ENCODE measurements at regions of chr6 and their contacts with region 1.

Region 1: DNA sequence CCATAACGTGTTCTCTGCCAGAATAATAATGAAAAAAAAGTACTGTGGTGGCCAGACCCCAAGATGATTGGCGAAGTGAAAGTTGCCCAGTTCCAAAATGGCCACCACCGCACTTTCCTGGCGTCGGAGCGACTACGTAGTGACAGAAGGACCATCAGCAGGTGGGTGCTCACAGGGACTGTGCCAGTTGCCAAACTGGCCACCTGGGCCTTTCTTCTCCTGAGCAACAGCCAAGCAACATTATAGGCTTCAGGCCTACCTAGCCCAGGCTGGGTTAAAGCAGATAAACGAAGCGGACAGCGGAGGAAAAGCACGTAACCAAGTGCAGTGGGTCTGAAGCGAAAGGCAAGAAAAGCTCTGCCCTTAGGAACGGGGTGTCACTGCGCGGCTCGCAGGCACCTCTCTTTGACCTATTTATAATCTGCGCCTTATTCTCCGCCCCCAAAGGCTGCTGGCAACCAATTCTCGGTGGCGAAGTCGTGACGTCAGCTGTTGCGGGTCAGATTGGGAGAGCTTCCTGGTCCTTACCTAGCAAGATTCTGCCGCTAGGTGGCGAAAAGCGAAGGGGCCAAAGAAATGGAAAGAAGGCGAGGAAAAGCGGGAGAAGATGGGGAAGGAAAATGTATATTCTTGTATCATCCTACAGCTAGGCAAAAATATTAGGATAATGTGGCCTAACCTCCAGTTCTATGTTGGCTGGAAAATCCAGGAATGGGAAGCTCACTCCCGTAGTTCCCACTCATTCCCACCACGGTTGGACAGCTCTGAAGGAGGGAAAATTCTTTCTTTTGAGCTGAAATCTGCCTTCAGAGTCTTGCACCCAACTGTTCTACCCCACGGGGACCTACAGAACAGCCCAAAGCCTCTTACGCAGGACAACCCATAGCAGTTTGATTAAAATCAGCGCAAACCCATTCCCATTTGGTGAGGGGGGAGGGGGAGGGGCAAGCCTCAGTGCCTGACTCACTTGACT is 6.9 kb upstream of the MOG start:
- DNase-seq: peak; percentile 99
- ATAC-seq: peak; percentile 89
- H3K4me3 Mint-ChIP-seq: peak overlapping the region; percentile 85
- H3K27ac Mint-ChIP-seq: peak overlapping the region; percentile 99
- H3K4me1 Mint-ChIP-seq: peaks cover 36% of the 10 kb centered on the region
- H3K27me3 Mint-ChIP-seq: no peaks in the 10 kb centered on the region
- CTCF ChIP-seq: peak; percentile 73

Region 2: GRCh38 chr6:29627755-29628418 is 22.1 kb before region 1 on chr6:
- CTCF ChIA-PET with region 1: interaction called, 63 read pairs
- POLR2A ChIA-PET with region 1: interaction called, 16 read pairs
- DNase-seq: peak; percentile 85
- ATAC-seq: peak; percentile 10
- H3K4me3 Mint-ChIP-seq: peak overlapping the region; percentile 87
- H3K27ac Mint-ChIP-seq: peak overlapping the region; percentile 93
- H3K4me1 Mint-ChIP-seq: peaks cover 76% of the 10 kb centered on the region
- H3K27me3 Mint-ChIP-seq: no peaks in the 10 kb centered on the region
- CTCF ChIP-seq: no peak

Region 3: GRCh38 chr6:29665942-29666825 is 16.2 kb after region 1 on chr6:
- CTCF ChIA-PET with region 1: interaction called, 192 read pairs
- POLR2A ChIA-PET with region 1: interaction called, 20 read pairs
- DNase-seq: no peak
- ATAC-seq: peak; percentile 13
- H3K4me3 Mint-ChIP-seq: peak overlapping the region; percentile 14
- H3K27ac Mint-ChIP-seq: peak overlapping the region; percentile 99
- H3K4me1 Mint-ChIP-seq: peaks cover 73% of the 10 kb centered on the region
- H3K27me3 Mint-ChIP-seq: peaks cover 23% of the 10 kb centered on the region
- CTCF ChIP-seq: no peak

Region 4: DNA sequence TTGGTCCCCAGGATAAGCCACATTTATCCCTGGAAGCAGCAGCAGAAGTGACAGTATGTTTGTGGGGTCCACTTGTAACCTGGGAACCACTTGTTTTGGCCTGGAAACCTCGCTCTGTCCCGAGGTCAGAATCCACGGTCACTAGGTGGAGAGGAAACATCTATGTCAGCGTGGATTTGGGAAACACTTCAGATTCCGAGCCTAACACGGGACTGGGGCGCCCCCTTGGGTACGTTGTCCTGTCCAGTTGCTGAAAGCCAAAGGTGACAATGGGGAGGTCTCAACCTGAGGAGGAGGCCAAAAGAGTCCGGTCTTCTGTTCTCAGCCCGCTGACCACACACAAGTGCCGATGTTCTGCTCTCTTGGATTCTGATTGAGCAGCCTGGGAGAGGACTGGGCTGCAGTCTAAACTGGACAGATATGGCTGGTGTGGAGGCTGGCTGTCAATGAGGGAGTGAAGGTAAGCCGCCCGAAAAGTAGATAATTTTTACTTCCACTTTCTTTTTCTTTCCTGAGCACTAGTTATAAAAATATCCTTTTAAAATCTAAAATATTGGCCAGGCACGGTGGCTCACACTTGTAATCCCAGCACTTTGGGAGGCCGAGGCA is 35.8 kb after region 1 on chr6:
- CTCF ChIA-PET with region 1: interaction called, 531 read pairs
- POLR2A ChIA-PET with region 1: interaction called, 8 read pairs
- DNase-seq: peak; percentile 84
- ATAC-seq: peak; percentile 88
- H3K4me3 Mint-ChIP-seq: no peak overlapping the region
- H3K27ac Mint-ChIP-seq: no peak overlapping the region
- H3K4me1 Mint-ChIP-seq: peaks cover 15% of the 10 kb centered on the region
- H3K27me3 Mint-ChIP-seq: peaks cover 2% of the 10 kb centered on the region; the same call in 1 of the 2 replicates
- CTCF ChIP-seq: no peak

Region 5: DNA sequence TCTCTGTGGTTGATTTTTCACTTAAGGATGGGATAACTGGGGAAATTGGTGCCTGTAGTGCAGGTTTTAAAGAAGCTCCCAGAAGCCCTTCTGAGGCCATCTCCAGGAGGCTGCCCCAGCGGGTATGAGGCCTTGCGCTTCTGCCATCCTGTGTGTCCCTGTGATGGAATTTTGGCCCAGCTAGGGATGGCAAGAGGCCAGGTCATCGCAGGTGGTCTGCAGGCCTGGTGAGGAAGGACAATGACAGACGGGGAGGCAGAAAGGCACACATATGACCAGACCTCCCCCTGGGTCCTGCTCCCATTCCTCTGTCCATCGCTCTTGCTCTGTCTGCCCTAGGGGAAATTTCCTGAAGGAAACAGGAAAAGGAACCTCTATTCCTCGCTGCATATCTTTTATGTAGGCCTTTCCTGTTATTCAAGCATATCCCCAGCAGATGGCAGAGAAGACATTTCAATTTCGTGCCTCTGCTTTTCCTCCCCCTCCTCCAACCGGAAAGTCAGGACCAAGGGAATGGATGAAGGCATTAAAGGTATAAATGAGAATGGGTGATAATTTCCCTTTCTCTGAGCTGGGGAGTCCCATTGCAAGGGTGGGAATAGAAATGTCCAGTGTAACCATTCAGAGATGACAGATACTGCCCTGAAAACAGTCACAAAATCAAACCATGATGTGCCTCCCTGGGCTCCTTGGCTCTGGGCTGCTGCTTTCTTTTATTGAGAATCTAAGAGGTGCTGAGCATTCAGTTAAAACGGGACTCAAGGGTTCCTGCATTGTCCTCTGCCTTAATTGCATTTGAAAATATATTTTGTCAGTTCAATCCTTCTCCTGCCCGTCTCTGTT is 55.6 kb after region 1 on chr6:
- CTCF ChIA-PET with region 1: interaction called, 12 read pairs
- POLR2A ChIA-PET with region 1: interaction called, 3 read pairs
- DNase-seq: no peak
- ATAC-seq: peak; percentile 64
- H3K4me3 Mint-ChIP-seq: no peak overlapping the region
- H3K27ac Mint-ChIP-seq: no peak overlapping the region
- H3K4me1 Mint-ChIP-seq: peaks cover 5% of the 10 kb centered on the region
- H3K27me3 Mint-ChIP-seq: peaks cover 19% of the 10 kb centered on the region
- CTCF ChIP-seq: no peak; the same call in 1 of the 2 replicates

Region 6: GRCh38 chr6:29757701-29758293 is 107.8 kb after region 1 on chr6:
- CTCF ChIA-PET with region 1: interaction called, 11 read pairs
- POLR2A ChIA-PET with region 1: interaction called, 6 read pairs
- DNase-seq: no peak
- ATAC-seq: no peak
- H3K4me3 Mint-ChIP-seq: no peak overlapping the region
- H3K27ac Mint-ChIP-seq: peak overlapping the region; percentile 42; the same call in 1 of the 2 replicates
- H3K4me1 Mint-ChIP-seq: peaks cover 69% of the 10 kb centered on the region
- H3K27me3 Mint-ChIP-seq: peaks cover 3% of the 10 kb centered on the region
- CTCF ChIP-seq: no peak

Measured in WTC11 (cell line).